Transverse colon (tissue), 4 donors: ENCODE measurements at regions of chr13 and their contacts with region 1.

Region 1: GRCh38 chr13:87942205-87942604 is 271.0 kb downstream of the SLITRK5 start:
- DNase-seq: no peak
- H3K4me3 ChIP-seq: no peak overlapping the region
- H3K27ac ChIP-seq: no peak overlapping the region
- H3K4me1 ChIP-seq: no peaks in the 10 kb centered on the region
- H3K27me3 ChIP-seq: no peaks in the 10 kb centered on the region
- CTCF ChIP-seq: no peak
- EP300 ChIP-seq: no peak
- POLR2A ChIP-seq: no peak

Region 2: GRCh38 chr13:87334176-87334575 is 608.0 kb before region 1 on chr13:
- in situ Hi-C with region 1: no loop called
- intact Hi-C with region 1: no loop called
- DNase-seq: no peak
- H3K4me3 ChIP-seq: no peak overlapping the region
- H3K27ac ChIP-seq: no peak overlapping the region
- H3K4me1 ChIP-seq: no peaks in the 10 kb centered on the region
- H3K27me3 ChIP-seq: no peaks in the 10 kb centered on the region
- CTCF ChIP-seq: no peak
- EP300 ChIP-seq: no peak
- POLR2A ChIP-seq: no peak

Region 3: GRCh38 chr13:87925006-87925405 is 17.2 kb before region 1 on chr13:
- in situ Hi-C with region 1: no loop called
- intact Hi-C with region 1: loop called (anchors 1 kb)
- DNase-seq: no peak
- H3K4me3 ChIP-seq: no peak overlapping the region
- H3K27ac ChIP-seq: no peak overlapping the region
- H3K4me1 ChIP-seq: no peaks in the 10 kb centered on the region
- H3K27me3 ChIP-seq: no peaks in the 10 kb centered on the region
- CTCF ChIP-seq: no peak
- EP300 ChIP-seq: no peak
- POLR2A ChIP-seq: no peak